Activated CD4-positive, alpha-beta memory T cell treated with anti-CD3 and anti-CD28 coated beads for 36 hours (primary cell): ENCODE measurements at regions of chr6 and their contacts with region 1.

Region 1: GRCh38 chr6:70520575-70520974 is 46.2 kb upstream of the SDHAF4 start:
- DNase-seq: no peak
- H3K4me3 Mint-ChIP-seq: no peak overlapping the region
- H3K27ac Mint-ChIP-seq: no peak overlapping the region
- H3K4me1 Mint-ChIP-seq: peaks cover 6% of the 10 kb centered on the region
- H3K27me3 Mint-ChIP-seq: no peaks in the 10 kb centered on the region

Region 2: GRCh38 chr6:70680396-70680795 is 159.8 kb after region 1 on chr6:
- CTCF ChIA-PET with region 1: interaction called, 93 read pairs
- POLR2A ChIA-PET with region 1: no interaction called
- intact Hi-C with region 1: loop called (anchors 2 kb)
- DNase-seq: no peak
- H3K4me3 Mint-ChIP-seq: no peak overlapping the region
- H3K27ac Mint-ChIP-seq: no peak overlapping the region
- H3K4me1 Mint-ChIP-seq: peaks cover 36% of the 10 kb centered on the region
- H3K27me3 Mint-ChIP-seq: no peaks in the 10 kb centered on the region

Region 3: DNA sequence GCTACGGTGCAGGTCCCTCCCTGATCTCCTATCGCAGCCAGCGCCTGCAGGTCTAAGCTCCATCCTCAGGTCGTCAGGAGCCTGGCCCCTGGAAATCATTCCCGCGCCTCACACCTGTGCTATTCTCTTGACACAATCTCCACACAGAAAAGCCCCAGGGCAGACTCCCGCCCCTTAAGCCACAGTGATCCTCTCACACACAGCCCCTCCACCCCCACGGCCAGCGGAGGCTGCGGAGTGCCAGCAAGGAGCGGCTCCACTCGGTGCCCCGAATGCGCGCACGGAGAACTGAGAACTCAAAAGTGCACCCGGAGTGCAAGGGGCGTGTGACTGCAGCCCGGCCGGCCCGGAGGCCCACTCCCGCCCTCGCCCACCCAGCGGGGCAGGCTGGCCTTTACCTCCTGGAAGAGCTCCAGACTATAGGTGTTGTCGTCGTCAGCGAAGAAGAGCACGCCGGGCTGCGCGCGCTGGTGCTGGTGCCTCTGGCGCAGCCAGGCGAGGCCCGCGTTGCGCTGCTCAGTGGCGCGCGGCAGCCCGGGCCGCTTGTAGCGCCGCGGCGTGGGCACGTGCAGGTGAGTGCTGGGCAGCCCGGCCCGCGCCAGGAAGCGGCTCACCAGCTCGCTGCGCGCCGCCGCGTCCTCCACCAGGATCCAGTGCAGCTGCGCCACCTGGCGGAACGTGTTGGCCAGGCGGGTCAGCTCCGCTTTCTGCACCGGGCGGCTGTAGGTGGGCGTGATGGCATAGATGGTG is 435.0 kb after region 1 on chr6:
- CTCF ChIA-PET with region 1: interaction called, 13 read pairs
- POLR2A ChIA-PET with region 1: no interaction called
- intact Hi-C with region 1: loop called (anchors 5 kb)
- DNase-seq: peak; percentile 91
- H3K4me3 Mint-ChIP-seq: peak overlapping the region; percentile 70
- H3K27ac Mint-ChIP-seq: no peak overlapping the region
- H3K4me1 Mint-ChIP-seq: peaks cover 11% of the 10 kb centered on the region
- H3K27me3 Mint-ChIP-seq: peaks cover 42% of the 10 kb centered on the region